GM12878 (cell line): ENCODE measurements at regions of chr18 and their contacts with region 1.

Region 1: DNA sequence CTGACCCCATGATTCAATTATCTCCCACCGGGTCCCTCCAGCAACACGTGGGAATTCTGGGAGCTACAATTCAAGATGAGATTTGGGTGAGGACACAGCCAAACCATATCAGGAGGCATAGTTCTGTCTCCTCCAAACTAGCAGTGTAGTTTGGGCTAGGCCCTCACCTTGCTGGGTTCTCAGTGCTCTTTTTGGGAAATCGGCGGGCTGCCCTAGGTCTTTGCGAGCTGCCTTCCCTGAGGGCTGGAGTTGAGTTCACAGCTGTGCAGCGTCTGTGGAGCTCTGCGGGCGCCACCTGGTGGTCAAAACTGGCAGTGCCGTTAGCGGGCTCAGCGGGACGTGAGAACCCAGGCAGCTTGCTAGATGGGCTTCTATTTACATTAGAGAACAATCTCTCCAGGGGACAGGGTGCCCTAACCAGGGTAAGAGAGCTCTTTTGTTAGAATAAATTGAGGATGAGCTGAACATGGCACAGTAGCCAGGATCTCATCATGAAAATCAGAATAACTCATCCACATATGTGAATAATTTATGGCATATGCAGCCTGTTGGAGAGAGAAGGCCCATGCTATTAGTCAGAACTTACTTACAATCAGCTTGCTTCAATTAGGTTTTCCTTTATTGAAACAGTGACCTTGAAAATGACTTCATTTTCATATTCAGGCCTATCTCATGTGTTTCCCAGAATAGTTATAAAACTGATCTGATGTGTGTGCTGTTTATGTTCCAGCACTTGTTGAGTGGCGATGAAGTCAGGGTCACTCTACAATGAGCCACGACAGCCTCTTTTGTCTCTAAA is 27.4 kb upstream of the YES1 start:
- DNase-seq: peak; percentile 25
- ATAC-seq: peak; percentile 100
- H3K4me3 ChIP-seq: no peak overlapping the region
- H3K27ac ChIP-seq: no peak overlapping the region
- H3K4me1 ChIP-seq: no peaks in the 10 kb centered on the region
- H3K27me3 ChIP-seq: no peaks in the 10 kb centered on the region
- CTCF ChIP-seq: peak; percentile 93 to 96 (median 96); a peak in 5 of 6 replicates
- EP300 ChIP-seq: no peak
- POLR2A ChIP-seq: no peak
- RAD21 ChIP-seq: peak; percentile 68

Region 2: DNA sequence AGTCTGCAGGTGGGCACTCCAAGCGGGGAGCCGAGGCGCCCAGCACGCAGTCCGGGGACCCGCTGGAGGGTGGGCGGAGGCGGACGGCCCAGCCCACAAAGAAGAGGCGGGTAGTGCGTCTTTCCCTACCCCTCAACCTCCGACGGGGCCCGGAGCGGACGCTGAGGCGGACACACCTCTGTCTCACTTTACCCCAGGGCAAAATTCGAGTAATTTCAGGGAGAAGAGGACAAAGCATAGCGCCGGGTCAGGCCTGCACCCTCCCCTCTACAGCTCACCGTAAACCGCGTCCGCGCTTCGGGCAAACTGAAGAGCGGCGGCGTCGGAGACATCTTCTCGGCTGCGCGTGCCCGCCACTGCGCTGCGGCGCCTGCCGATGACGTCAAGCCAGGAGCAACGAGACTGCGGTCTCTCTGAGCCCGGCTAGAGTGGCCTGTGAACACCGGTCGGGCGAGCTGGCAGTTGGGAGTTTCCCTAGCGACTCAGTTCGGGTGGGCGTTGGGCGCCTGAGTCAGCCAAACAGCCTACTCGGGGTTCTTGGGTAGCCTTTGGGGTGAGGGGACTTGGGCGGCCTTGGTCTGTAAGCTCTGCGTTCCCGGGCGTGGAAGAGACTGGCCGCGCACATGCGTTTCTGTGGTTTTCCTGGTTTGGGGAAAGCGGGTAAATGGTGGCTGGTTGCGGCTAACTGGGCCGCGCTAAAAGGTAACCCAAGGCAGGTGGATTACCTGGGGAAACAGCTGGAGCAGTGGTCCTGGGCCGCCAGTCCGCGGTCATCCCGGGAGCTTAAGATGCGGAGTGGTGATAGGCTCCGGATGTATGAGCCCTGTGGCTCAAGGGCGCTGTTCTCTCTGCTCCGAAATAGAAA is 571.5 kb before region 1 on chr18 and contains the start of gene THOC1:
- CTCF ChIA-PET with region 1: interaction called, 4 read pairs
- POLR2A ChIA-PET with region 1: no interaction called
- RAD21 ChIA-PET with region 1: no interaction called
- SMC1A ChIA-PET with region 1: no interaction called
- in situ Hi-C with region 1: no loop called
- intact Hi-C with region 1: loop called (anchors 10 kb)
- DNase-seq: peak; percentile 70
- ATAC-seq: peak; percentile 93
- H3K4me3 ChIP-seq: peak within 1 kb of the TSS; percentile 95
- H3K27ac ChIP-seq: peak within 1 kb of the TSS; percentile 97
- H3K4me1 ChIP-seq: no peaks in the 10 kb centered on the region; the same call in 1 of the 2 replicates
- H3K27me3 ChIP-seq: no peaks in the 10 kb centered on the region
- CTCF ChIP-seq: no peak
- EP300 ChIP-seq: peak; percentile 50 to 54; a peak in 1 of 4 replicates
- POLR2A ChIP-seq: peak; percentile 98
- RAD21 ChIP-seq: no peak
- polyA plus RNA-seq, gene THOC1: 35.5 to 38.5 TPM

Region 3: DNA sequence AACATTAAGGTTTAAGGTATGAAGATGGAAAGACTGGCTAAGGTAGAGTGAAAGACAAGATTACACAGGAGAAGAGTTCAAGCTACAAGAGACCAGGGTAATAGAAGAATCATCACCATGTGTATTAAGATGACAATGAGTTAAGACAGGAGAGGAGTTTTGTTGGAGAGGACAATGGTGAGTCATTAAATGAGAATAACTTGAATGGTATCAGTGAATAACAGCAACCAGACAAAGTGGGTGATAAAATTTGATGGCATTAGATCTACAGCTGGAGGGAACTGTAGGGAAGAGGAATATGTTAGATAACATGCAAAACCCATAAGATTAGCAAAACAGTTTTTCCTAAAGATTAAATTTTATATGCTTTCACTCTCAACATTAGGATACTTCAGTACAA is 108.2 kb before region 1 on chr18:
- CTCF ChIA-PET with region 1: interaction called, 295 read pairs
- POLR2A ChIA-PET with region 1: no interaction called
- RAD21 ChIA-PET with region 1: interaction called, 3 read pairs
- SMC1A ChIA-PET with region 1: interaction called, 222 read pairs
- in situ Hi-C with region 1: no loop called
- intact Hi-C with region 1: no loop called
- DNase-seq: no peak
- ATAC-seq: no peak
- H3K4me3 ChIP-seq: no peak overlapping the region
- H3K27ac ChIP-seq: no peak overlapping the region
- H3K4me1 ChIP-seq: no peaks in the 10 kb centered on the region
- H3K27me3 ChIP-seq: no peaks in the 10 kb centered on the region
- CTCF ChIP-seq: no peak
- EP300 ChIP-seq: no peak
- POLR2A ChIP-seq: no peak
- RAD21 ChIP-seq: no peak

Region 4: GRCh38 chr18:812376-813171 is 26.8 kb before region 1 on chr18:
- CTCF ChIA-PET with region 1: interaction called, 16 read pairs
- POLR2A ChIA-PET with region 1: no interaction called
- RAD21 ChIA-PET with region 1: interaction called, 3 read pairs
- SMC1A ChIA-PET with region 1: interaction called, 91 read pairs
- in situ Hi-C with region 1: no loop called
- intact Hi-C with region 1: no loop called
- DNase-seq: peak; percentile 39
- ATAC-seq: peak; percentile 77
- H3K4me3 ChIP-seq: peak overlapping the region; percentile 67
- H3K27ac ChIP-seq: peak overlapping the region; percentile 81
- H3K4me1 ChIP-seq: no peaks in the 10 kb centered on the region
- H3K27me3 ChIP-seq: no peaks in the 10 kb centered on the region
- CTCF ChIP-seq: no peak
- EP300 ChIP-seq: peak in 1 of 2 experiments; percentile 41; a peak in 1 of 4 replicates
- POLR2A ChIP-seq: peak; percentile 74
- RAD21 ChIP-seq: no peak

Region 5: DNA sequence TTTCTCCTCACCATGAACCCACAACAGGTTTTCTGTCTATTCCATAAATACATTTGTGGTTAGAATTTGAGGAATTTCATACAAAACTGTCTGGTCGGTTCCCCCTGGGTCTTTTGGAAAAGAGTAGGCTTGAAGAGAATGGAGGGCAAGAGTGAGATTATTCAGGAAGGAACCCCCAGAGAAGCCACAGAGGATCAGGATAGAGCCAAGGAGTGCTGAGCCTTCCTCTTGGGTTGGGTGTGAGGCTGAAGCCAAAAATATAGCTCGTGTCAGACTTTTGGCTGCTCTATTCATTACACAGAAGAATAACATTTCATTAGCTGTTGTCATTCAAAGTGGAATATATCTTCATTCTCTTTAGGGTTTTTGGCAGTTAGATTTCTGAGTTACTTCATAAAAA is 18.6 kb after region 1 on chr18:
- CTCF ChIA-PET with region 1: interaction called, 13 read pairs
- POLR2A ChIA-PET with region 1: no interaction called
- RAD21 ChIA-PET with region 1: no interaction called
- SMC1A ChIA-PET with region 1: no interaction called
- in situ Hi-C with region 1: no loop called
- intact Hi-C with region 1: no loop called
- DNase-seq: no peak
- ATAC-seq: no peak
- H3K4me3 ChIP-seq: no peak overlapping the region
- H3K27ac ChIP-seq: no peak overlapping the region
- H3K4me1 ChIP-seq: no peaks in the 10 kb centered on the region
- H3K27me3 ChIP-seq: no peaks in the 10 kb centered on the region
- CTCF ChIP-seq: no peak
- EP300 ChIP-seq: no peak
- POLR2A ChIP-seq: no peak
- RAD21 ChIP-seq: no peak

Region 6: DNA sequence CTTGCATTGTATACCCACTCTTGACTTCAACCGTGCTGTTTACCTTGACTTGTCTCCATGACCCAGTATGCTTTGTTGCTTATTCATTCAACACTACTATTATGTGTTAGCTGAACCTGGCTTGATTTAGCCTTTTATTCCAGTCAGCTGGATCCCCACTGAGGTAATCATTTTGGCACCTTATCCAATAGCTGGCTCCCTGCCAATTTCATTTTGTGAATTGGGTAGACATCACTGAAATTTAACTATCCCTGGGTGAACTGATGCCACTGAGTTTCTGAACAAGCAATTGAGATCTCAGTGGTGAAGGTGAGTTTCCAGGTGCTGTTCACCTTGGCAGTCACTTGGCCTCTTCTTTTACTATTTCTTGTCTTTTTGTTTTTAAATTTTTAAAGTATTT is 649.5 kb after region 1 on chr18:
- CTCF ChIA-PET with region 1: no interaction called
- POLR2A ChIA-PET with region 1: no interaction called
- RAD21 ChIA-PET with region 1: no interaction called
- SMC1A ChIA-PET with region 1: no interaction called
- in situ Hi-C with region 1: no loop called
- intact Hi-C with region 1: no loop called
- DNase-seq: no peak
- ATAC-seq: no peak
- H3K4me3 ChIP-seq: no peak overlapping the region
- H3K27ac ChIP-seq: no peak overlapping the region
- H3K4me1 ChIP-seq: no peaks in the 10 kb centered on the region
- H3K27me3 ChIP-seq: no peaks in the 10 kb centered on the region
- CTCF ChIP-seq: no peak
- EP300 ChIP-seq: no peak
- POLR2A ChIP-seq: no peak
- RAD21 ChIP-seq: no peak

Region 7: DNA sequence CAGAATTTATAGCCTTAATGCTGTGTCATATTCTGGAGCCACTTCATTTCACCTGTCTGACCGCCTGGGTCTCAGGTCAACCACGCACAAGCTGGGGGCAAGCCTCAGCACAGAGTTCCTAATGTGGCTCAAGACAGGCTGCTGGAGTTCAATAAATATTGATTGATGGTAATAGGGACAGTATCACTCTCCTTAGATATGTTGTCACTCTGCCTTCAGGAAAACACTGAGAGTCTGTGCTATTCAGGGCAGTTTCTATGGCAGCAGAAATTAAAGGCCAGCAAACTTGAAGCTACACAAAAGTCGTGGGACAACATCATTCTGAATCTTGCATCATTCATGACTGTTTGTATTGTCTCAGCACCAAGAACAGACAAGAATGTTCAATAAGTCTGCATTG is 1035.8 kb after region 1 on chr18:
- CTCF ChIA-PET with region 1: no interaction called
- POLR2A ChIA-PET with region 1: no interaction called
- RAD21 ChIA-PET with region 1: no interaction called
- SMC1A ChIA-PET with region 1: no interaction called
- in situ Hi-C with region 1: no loop called
- intact Hi-C with region 1: no loop called
- DNase-seq: no peak
- ATAC-seq: no peak
- H3K4me3 ChIP-seq: no peak overlapping the region
- H3K27ac ChIP-seq: no peak overlapping the region
- H3K4me1 ChIP-seq: no peaks in the 10 kb centered on the region
- H3K27me3 ChIP-seq: no peaks in the 10 kb centered on the region
- CTCF ChIP-seq: no peak
- EP300 ChIP-seq: no peak
- POLR2A ChIP-seq: no peak
- RAD21 ChIP-seq: no peak